ENCODE measurements at regions of chr1 and their contacts with region 1.

Region 1: DNA sequence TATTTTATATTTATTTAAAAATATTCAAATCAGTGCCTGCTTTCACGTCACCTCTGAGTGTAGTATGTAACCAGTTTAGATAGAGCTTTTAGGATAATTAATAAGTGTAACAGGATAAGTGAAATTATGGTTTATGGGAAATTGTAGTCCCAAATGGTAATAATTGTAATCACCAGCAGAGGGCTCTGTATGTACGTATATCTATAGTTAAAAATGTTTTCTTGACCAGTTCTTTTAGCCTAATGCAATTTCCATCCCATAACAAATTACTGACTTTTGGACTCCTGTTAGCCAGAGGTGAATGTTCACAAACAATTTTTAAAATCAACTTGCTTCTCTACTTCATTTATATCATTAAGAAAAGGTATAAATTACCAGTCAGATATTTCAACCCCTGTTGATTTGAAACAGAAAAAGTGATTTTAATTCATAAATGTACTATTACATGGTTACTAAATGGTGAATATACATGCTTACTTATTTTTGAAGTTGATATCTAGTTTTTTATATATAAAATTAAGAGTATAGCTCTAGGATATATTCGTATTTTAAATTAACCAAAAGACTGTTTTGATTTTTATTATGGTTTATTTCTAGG is 25.3 kb downstream of the SLC30A7 start:
- DNase-seq: peak; percentile 9
- H3K4me3 Mint-ChIP-seq: no peak overlapping the region
- H3K27ac Mint-ChIP-seq: no peak overlapping the region
- H3K4me1 Mint-ChIP-seq: no peaks in the 10 kb centered on the region
- H3K27me3 Mint-ChIP-seq: no peaks in the 10 kb centered on the region
- CTCF ChIP-seq: no peak

Region 2: GRCh38 chr1:99956755-99957154 is 964.5 kb before region 1 on chr1:
- CTCF ChIA-PET with region 1: no interaction called
- intact Hi-C with region 1: no loop called
- DNase-seq: no peak
- H3K4me3 Mint-ChIP-seq: no peak overlapping the region
- H3K27ac Mint-ChIP-seq: no peak overlapping the region
- H3K4me1 Mint-ChIP-seq: no peaks in the 10 kb centered on the region
- H3K27me3 Mint-ChIP-seq: no peaks in the 10 kb centered on the region
- CTCF ChIP-seq: no peak

Region 3: DNA sequence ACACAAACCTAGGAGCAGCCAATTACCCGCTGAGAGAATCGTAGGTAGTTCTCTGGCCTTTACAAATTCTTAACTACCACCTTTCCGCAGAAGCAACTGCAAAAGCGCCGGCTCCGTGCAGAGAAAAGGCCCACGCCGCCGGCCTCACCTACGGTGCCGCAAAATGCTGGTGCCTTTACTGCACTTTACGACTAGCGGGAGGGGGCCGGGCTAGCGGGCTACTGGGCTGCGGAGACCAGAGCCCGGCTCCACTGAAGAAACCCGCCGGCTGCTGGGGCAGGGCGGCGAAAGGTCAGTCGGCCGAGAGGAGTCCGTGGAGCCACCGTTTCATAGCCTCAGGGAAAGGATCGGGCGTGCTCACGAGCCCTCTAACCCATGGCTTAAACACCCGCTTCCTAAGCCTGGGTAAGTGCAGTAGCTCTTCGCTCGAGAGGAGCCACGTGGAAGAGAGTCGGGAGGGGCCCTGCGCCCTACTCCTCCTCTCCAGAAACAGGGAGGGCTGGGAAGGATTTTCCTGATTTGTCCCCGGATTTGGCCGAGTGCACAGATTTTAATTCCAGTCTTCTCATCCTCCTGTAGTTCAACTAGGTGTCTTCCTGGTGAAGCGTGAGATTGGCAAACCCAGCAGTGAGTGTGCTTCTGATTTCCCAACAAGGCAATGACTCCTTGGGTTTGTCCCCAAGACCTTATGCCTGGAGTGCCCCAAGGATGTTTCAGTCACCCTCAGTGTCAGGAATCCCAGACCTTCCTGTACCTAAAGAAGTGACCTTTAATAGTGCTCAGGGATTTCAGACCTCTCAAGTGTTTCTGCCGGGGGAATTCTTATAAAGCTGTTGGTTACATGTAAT is 104.7 kb after region 1 on chr1 and contains the start of gene DPH5:
- CTCF ChIA-PET with region 1: no interaction called
- intact Hi-C with region 1: loop called (anchors 10 kb)
- DNase-seq: peak; percentile 86
- H3K4me3 Mint-ChIP-seq: peak within 1 kb of the TSS; percentile 93
- H3K27ac Mint-ChIP-seq: peak within 1 kb of the TSS; percentile 93
- H3K4me1 Mint-ChIP-seq: peaks cover 17% of the 10 kb centered on the region
- H3K27me3 Mint-ChIP-seq: no peaks in the 10 kb centered on the region
- CTCF ChIP-seq: no peak
- total RNA-seq, gene DPH5: 20.6 and 25.8 TPM in 2 replicates

Region 4: DNA sequence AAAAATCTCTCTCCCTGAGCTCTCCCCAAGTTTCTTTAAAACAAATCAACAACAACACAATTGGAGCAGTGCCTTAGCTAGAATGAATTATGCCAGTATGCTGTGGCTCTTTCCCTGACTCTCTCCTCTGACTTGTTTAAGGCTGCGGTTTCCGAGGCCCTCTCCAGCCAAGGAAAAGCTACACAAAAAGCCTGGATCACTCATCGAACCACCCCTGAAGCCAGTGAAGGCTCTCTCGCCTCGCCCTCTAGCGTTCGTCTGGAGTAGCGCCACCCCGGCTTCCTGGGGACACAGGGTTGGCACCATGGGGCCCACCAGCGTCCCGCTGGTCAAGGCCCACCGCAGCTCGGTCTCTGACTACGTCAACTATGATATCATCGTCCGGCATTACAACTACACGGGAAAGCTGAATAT is 317.5 kb after region 1 on chr1:
- CTCF ChIA-PET with region 1: no interaction called
- intact Hi-C with region 1: loop called (anchors 2 kb)
- DNase-seq: peak; percentile 81
- H3K4me3 Mint-ChIP-seq: no peak overlapping the region
- H3K27ac Mint-ChIP-seq: no peak overlapping the region
- H3K4me1 Mint-ChIP-seq: peaks cover 21% of the 10 kb centered on the region
- H3K27me3 Mint-ChIP-seq: peaks cover 65% of the 10 kb centered on the region
- CTCF ChIP-seq: peak; percentile 81

Region 5: DNA sequence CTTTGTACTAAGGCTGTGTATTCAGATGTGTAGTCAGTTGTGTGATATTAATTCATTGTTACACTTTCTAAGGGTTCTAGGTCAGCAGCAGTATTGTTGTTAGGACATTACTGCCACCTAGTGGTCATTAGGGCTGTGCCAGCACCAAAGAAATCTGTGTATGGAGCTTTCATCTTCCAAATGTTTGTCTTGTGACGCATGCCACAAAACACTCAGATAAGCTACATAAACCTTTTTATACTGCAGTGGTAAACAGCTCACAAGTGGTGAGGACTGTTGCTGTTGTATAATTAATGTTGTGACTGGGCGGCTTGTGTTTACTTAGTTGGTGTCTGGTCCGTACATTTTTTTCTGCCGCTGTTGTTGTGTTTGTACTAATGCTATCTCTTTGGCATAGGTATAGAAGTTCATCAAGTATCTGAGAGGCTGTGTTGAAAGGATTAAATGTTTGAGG is 367.3 kb after region 1 on chr1:
- CTCF ChIA-PET with region 1: interaction called, 3 read pairs
- intact Hi-C with region 1: loop called (anchors 1 kb)
- DNase-seq: peak; percentile 59
- H3K4me3 Mint-ChIP-seq: no peak overlapping the region
- H3K27ac Mint-ChIP-seq: no peak overlapping the region
- H3K4me1 Mint-ChIP-seq: peaks cover 22% of the 10 kb centered on the region
- H3K27me3 Mint-ChIP-seq: no peaks in the 10 kb centered on the region
- CTCF ChIP-seq: peak; percentile 33

Region 6: DNA sequence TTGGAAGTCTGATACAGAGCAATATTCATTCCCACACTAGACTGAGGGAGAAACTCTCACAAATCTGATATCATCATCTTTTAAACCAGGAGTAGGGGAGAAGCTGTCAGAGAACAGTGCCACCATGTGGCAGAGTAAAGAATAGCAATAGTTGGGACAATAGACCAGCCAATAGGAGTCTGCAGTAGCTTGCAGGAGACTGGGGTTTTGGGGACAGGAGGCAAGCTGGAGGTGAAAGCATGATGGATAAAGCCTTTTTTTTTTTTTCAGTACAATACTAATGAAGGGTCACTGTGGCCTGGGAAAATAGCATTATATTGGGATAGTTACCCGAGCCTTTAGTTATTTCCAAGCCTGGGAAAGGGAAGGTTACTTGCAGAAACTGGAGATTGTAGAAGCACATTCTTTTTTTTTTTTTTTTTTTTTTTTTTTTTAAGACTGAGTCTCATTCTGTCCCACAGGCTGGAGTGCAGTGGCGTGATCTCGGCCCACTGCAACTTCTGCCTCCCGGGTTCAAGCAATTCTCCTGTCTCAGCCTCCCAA is 436.3 kb after region 1 on chr1:
- CTCF ChIA-PET with region 1: no interaction called
- intact Hi-C with region 1: loop called (anchors 5 kb)
- DNase-seq: peak; percentile 61
- H3K4me3 Mint-ChIP-seq: no peak overlapping the region
- H3K27ac Mint-ChIP-seq: no peak overlapping the region
- H3K4me1 Mint-ChIP-seq: no peaks in the 10 kb centered on the region
- H3K27me3 Mint-ChIP-seq: peaks cover 32% of the 10 kb centered on the region
- CTCF ChIP-seq: peak; percentile 56